AG04449 (cell line): ENCODE measurements at regions of chr7 and their contacts with region 1.

Region 1: GRCh38 chr7:121395961-121396757 is at the start of gene FAM3C:
- DNase-seq: peak; percentile 33
- H3K4me3 ChIP-seq: peak within 1 kb of the TSS; percentile 73
- CTCF ChIP-seq: peak; percentile 82

Region 2: DNA sequence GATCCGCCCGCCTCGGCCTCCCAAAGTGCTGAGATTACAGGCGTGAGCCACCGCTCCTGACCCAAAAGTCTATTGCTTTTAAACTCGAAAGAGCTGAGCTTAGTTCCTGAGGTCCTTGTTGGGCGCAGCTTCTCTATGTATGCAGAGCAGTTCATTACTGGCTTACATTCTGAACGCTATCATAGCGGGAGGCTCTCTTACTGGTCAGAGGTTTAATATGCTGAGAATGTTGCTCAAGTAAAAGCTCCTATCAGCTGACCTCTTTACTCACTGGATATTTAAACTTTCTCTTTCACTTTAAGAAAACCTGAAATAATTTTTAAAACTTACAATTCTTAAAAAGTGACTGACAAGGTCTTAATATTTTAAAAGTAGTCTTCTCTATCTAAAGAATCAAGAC is 228.2 kb before region 1 on chr7:
- CTCF ChIA-PET with region 1: no interaction called
- POLR2A ChIA-PET with region 1: no interaction called
- DNase-seq: peak; percentile 4
- H3K4me3 ChIP-seq: no peak overlapping the region
- CTCF ChIP-seq: no peak

Region 3: DNA sequence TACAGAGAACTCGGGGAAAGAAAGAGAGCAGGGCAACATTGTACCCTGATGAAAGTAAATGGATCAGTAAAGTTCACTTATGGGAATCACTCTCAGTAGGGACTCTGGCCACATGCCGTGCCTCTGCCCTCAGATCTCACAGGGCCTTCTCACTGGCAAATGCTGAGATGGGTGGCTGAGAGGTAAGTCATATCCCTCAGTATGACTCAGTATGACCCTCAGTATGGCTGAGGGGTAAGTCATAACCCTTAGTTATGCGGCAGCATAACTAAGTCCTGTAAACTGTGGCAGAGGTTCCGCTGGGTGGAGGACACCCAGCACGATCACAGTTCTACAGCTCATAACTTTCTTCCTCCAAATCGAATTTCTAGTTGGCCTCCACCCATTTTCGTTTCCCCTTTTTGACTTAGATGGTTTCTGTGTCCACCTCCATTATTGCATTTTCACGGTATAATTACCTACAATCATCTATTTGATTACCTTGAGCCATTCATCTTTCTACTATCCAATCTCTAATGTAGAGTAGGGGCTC is 93.9 kb before region 1 on chr7:
- CTCF ChIA-PET with region 1: no interaction called
- POLR2A ChIA-PET with region 1: no interaction called
- DNase-seq: no peak
- H3K4me3 ChIP-seq: no peak overlapping the region
- CTCF ChIP-seq: no peak

Region 4: GRCh38 chr7:121379930-121380329 is 16.2 kb before region 1 on chr7:
- CTCF ChIA-PET with region 1: interaction called, 96 read pairs
- POLR2A ChIA-PET with region 1: no interaction called
- DNase-seq: no peak
- H3K4me3 ChIP-seq: no peak overlapping the region
- CTCF ChIP-seq: no peak

Region 5: DNA sequence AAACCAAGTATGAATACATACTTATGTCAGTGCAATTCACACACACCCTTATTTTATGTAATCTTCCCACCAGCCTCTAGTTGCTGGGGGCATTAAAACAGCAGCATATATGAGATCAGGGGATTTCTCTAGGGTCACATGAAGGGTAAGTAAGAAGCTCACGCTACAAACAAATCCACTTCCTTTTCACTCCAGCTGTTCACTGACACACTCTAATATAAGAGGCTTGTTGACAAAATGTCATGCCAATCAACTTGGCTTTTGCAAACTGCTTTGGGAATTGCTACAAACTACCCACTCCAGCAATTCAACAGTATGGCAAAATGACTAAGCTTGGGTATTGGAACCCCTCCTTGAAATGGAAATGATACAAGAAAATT is 10.4 kb before region 1 on chr7:
- CTCF ChIA-PET with region 1: interaction called, 96 read pairs
- POLR2A ChIA-PET with region 1: interaction called, 5 read pairs
- DNase-seq: no peak
- H3K4me3 ChIP-seq: no peak overlapping the region
- CTCF ChIP-seq: no peak

Region 6: DNA sequence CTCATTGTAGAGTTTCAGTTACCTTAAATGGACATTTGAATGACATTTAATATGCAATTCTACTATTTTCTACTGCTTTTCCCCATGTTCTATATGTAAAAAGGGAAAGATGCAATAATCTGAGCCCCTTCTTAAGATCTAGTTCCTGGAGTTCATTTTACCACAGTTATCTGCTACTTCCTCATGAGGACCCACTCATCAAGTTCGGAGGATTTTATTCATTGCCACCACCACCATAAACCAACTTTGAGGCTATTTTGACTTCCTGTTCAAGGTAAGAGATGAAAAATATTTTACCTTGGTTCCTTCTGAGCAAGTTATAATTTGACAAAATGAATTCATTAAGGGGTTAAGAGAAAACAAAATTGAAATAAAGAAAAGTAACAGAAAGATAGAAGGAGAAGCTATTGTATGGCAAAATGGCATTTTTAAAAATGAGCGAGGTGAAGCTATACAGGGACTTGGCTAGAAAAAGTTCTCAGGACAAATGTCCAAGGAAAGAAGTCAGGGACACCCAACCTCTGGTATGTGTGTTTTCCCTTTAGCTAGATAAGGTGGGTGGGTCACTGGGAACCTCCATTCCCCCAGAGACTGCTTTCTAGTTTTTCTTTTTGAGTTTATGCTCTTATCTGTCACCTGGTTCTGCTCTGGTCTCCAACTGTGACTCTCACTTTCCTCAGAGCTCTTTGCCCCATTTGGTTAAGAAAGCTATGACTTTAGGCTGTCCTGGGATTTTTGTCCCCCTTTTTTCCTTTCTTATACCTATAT is 14.9 kb after region 1 on chr7:
- CTCF ChIA-PET with region 1: interaction called, 58 read pairs
- POLR2A ChIA-PET with region 1: no interaction called
- DNase-seq: no peak
- H3K4me3 ChIP-seq: no peak overlapping the region
- CTCF ChIP-seq: no peak

Region 7: DNA sequence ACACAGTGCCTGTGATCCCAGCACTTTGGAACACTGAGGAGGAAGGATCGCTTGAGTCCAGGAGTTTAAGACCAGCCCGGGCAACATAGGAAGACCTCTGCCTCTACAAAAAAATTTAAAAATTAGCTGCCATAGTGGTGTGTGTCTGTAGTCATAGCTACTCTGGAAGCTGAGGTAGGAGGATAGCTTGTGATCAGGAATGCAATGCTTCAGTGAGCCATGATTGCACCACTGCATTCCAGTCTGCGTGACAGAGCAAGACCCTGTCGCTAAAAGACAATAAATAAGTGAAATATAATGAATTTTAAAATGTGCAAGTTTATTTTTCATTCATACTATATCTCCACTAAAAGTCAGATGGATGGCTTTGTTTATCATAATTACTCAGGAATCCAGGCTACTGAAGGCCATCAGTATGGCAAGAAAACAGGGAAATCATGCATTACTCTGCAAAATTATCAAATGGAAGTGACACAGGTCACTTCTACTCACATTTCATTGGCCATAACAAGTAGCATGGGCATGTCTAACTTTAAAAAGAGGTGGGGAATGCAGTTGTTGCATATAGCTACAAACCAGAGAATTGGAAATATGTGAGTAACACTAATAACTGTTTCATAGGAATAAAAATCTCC is 32.8 kb after region 1 on chr7:
- CTCF ChIA-PET with region 1: interaction called, 14 read pairs
- POLR2A ChIA-PET with region 1: interaction called, 4 read pairs
- DNase-seq: peak; percentile 19
- H3K4me3 ChIP-seq: no peak overlapping the region
- CTCF ChIP-seq: no peak